Mucosa of descending colon (tissue), 3 donors: ENCODE measurements at regions of chr14 and their contacts with region 1.

Region 1: GRCh38 chr14:51283402-51284085 is 43.5 kb downstream of the TMX1 start:
- DNase-seq: no peak
- ATAC-seq: peak; percentile 71
- H3K4me3 ChIP-seq: no peak overlapping the region
- H3K4me1 ChIP-seq: no peaks in the 10 kb centered on the region
- CTCF ChIP-seq: peak; percentile 25

Region 2: GRCh38 chr14:51107801-51108200 is 175.7 kb before region 1 on chr14:
- intact Hi-C with region 1: no loop called
- DNase-seq: no peak
- ATAC-seq: no peak
- H3K4me3 ChIP-seq: no peak overlapping the region
- H3K4me1 ChIP-seq: no peaks in the 10 kb centered on the region
- CTCF ChIP-seq: no peak

Region 3: GRCh38 chr14:51147183-51147582 is 136.4 kb before region 1 on chr14:
- intact Hi-C with region 1: no loop called
- DNase-seq: no peak
- ATAC-seq: no peak
- H3K4me3 ChIP-seq: no peak overlapping the region
- H3K4me1 ChIP-seq: no peaks in the 10 kb centered on the region
- CTCF ChIP-seq: no peak

Region 4: DNA sequence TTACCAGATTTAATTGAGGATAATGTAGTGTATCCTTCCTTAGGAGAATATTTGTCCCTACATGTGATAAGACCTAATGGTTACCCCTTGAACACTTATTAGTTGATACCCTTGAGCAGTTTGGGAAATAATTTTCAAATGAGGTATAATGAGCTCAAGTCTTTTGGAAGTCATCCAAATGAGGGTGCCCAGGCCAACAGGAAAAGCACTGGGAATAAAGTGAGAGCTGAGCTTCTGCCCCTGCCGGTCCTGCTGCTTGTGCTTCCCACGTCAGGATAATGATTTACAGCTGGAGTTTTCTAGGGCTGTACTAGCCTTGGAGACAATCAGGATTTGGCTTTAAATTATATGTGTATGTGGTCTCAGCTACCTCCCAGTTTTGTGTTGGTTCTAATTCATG is 189.3 kb after region 1 on chr14:
- intact Hi-C with region 1: no loop called
- DNase-seq: no peak
- ATAC-seq: peak; percentile 18
- H3K4me3 ChIP-seq: no peak overlapping the region
- H3K4me1 ChIP-seq: no peaks in the 10 kb centered on the region
- CTCF ChIP-seq: no peak

Region 5: DNA sequence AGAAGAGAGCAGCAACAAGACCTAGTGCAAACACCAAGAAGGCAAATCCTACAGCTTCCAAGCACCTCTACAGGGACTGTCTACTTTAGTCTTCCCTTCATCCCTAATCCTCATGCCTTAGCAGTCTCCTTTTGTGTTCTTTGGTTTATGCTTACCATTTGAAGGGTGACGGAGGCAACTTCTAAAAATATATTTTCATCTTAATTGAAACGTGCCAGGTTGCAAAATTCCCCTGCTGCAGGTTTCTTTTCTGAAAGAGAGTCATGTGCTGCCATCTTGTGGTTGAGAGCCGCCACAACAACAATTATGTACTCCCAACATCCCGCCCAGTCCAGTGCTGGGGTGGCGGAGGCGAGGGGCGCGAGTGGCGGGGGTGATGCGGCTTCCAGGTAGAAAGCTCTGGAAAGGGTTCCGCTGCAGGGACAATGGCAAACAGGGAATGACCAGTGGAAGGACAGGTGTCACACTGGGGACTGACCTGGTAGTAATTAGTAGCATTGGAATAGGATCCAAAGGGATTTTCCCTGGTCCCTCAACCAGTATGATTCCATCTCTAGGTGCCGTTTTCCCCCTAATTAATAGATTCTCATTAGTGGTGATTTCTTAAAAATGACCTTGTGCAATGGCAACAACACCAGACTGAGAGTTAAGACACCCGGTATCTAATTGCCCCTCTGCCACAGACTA is 496.6 kb after region 1 on chr14:
- intact Hi-C with region 1: loop called (anchors 5 to 10 kb)
- DNase-seq: peak in 2 of 3 donors; percentile 46 to 84
- ATAC-seq: peak; percentile 77
- H3K4me3 ChIP-seq: no peak overlapping the region
- H3K4me1 ChIP-seq: no peaks in the 10 kb centered on the region
- CTCF ChIP-seq: peak; percentile 67